HepG2 (cell line): ENCODE measurements at regions of chr4 and their contacts with region 1.

Region 1: GRCh38 chr4:165096776-165097175 is 15.9 kb downstream of the TMEM192 start:
- DNase-seq: peak; percentile 8
- ATAC-seq: peak; percentile 52; the same call in 2 of the 3 replicates
- H3K4me3 ChIP-seq: no peak overlapping the region
- H3K27ac ChIP-seq: no peak overlapping the region
- H3K4me1 ChIP-seq: no peaks in the 10 kb centered on the region
- H3K27me3 ChIP-seq: no peaks in the 10 kb centered on the region
- CTCF ChIP-seq: peak; percentile 48
- EP300 ChIP-seq: no peak
- POLR2A ChIP-seq: no peak
- RAD21 ChIP-seq: no peak

Region 2: DNA sequence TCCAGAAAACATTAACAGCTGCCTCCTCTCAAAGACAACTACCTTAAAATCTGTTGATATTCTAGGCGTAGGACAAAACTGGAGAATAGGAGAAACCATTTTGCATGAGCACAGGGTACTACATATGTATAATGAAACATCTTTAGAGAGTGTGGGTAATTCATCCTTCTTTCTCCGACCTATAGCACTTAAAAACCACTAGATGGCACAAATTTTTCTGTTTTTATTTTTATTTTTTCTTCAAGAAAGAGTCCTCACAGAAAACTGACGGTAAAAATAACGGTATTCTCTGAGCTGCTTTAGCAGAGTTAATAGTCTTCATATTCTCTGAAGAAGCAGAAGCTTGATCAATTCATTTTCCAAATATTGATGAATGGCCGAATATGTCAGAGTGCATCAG is 328.3 kb before region 1 on chr4:
- CTCF ChIA-PET with region 1: no interaction called
- POLR2A ChIA-PET with region 1: no interaction called
- in situ Hi-C with region 1: no loop called
- intact Hi-C with region 1: loop called (anchors 2 kb)
- DNase-seq: no peak
- ATAC-seq: peak; percentile 59; the same call in 2 of the 3 replicates
- H3K4me3 ChIP-seq: no peak overlapping the region
- H3K27ac ChIP-seq: no peak overlapping the region
- H3K4me1 ChIP-seq: no peaks in the 10 kb centered on the region
- H3K27me3 ChIP-seq: peaks cover 0 to 5% of the 10 kb centered on the region in 2 experiments; a peak in 1 of 5 replicates
- CTCF ChIP-seq: no peak
- EP300 ChIP-seq: no peak
- POLR2A ChIP-seq: no peak
- RAD21 ChIP-seq: no peak

Region 3: DNA sequence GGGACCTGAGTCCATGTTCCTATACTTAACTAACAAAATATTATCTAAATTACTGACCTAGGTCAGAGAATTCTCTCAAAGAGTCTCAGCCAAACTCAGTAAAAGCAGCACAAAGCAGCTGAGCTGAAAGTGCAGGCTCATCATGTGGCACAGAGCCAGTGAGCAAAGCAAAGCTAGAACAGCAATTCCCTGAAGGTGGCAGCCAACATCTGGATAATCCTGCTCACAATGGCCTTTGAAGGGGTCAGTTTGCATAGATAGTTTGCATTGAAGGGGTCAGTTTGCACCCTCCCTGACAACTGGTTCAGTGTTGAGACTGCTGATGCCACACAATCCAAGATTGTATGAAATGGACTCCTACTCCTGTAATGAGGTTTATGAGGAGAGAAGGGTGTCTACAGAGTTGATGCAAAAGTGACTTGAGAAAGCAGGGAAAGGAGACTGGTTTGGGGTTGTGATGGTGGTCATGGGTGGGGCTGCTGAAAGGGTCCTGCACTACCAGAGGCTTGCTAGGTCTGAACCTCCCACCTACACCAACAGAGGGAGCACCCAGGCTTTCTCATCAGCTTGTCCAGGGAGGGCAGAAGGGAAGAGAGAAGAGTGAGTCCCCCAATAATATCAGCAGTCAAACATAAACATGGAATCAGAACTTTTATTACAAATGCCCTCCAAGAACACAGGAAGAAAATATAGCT is 159.1 kb before region 1 on chr4:
- CTCF ChIA-PET with region 1: interaction called, 3 read pairs
- POLR2A ChIA-PET with region 1: no interaction called
- in situ Hi-C with region 1: no loop called
- intact Hi-C with region 1: loop called (anchors 2 kb)
- DNase-seq: peak; percentile 12
- ATAC-seq: peak; percentile 78
- H3K4me3 ChIP-seq: no peak overlapping the region
- H3K27ac ChIP-seq: no peak overlapping the region
- H3K4me1 ChIP-seq: no peaks in the 10 kb centered on the region
- H3K27me3 ChIP-seq: no peaks in the 10 kb centered on the region; a peak in 1 of 5 replicates
- CTCF ChIP-seq: peak; percentile 27; the same call in 1 of the 2 replicates
- EP300 ChIP-seq: no peak
- POLR2A ChIP-seq: no peak
- RAD21 ChIP-seq: no peak